ENCODE measurements at regions of chr2 and their contacts with region 1.

Region 1: GRCh38 chr2:233426619-233427342 is 72.5 kb downstream of the DGKD start:
- DNase-seq: no peak
- H3K4me3 ChIP-seq: no peak overlapping the region
- H3K27ac ChIP-seq: no peak overlapping the region
- H3K4me1 ChIP-seq: peaks cover 10% of the 10 kb centered on the region
- H3K27me3 ChIP-seq: no peaks in the 10 kb centered on the region
- CTCF ChIP-seq: no peak
- POLR2A ChIP-seq: no peak

Region 2: DNA sequence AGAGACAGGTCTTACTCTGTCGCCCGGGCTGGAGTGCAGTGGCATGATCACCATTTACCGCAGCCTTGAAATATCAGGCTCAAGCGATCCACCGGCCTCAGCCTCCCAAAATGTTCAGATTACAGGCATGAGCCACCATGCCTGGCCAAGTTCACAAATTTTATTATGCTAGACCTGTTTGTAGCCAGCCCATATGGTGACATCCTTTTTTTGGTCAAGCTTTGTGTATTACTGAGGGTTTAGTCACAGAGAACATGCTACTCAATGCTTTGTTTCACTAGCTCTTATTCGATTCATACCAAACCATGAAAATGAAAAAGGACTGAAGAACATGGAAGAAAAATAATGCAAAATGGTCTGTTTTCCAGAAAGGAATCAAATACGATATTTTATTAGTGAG is 31.1 kb before region 1 on chr2:
- CTCF ChIA-PET with region 1: no interaction called
- POLR2A ChIA-PET with region 1: no interaction called
- dilution Hi-C with region 1: no loop called
- intact Hi-C with region 1: no loop called
- DNase-seq: no peak
- H3K4me3 ChIP-seq: no peak overlapping the region
- H3K27ac ChIP-seq: no peak overlapping the region
- H3K4me1 ChIP-seq: no peaks in the 10 kb centered on the region
- H3K27me3 ChIP-seq: no peaks in the 10 kb centered on the region
- CTCF ChIP-seq: no peak
- POLR2A ChIP-seq: no peak

Region 3: DNA sequence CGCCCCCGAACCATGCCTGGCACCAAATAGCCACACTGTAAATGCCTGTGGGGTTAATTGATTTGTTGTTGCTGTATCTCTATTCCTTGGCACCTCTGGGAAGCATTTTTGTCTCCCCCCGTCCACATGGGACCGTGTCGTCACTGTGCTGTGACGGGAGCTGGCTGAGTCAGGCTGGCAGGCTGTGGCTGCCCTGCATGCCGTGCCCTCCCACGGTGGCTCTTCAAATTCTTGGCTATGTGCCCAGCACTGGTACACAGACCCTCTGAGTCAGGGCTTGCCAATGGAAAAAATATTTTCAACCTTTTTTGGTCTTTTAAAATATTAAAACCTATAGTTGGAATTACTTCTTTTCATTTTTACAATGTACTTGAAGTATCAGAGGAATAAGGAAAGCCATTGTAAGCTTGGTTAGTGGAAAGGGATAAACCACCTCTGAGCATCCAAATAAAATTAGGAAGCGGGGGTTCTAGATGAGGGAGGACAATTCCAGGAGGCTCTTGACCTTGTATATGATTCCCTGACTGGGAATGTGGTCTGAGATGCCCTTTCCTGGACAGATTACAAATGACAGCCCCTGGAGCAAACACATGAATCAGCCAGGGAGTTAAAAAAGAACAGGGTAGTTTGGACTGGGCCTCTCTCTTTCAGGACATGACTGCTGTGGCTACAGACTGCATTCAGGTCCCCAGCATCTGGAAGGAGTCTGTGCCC is 13.1 kb before region 1 on chr2:
- CTCF ChIA-PET with region 1: interaction called, 6 read pairs
- POLR2A ChIA-PET with region 1: no interaction called
- dilution Hi-C with region 1: no loop called
- intact Hi-C with region 1: loop called (anchors 1 kb)
- DNase-seq: peak; percentile 80
- H3K4me3 ChIP-seq: no peak overlapping the region
- H3K27ac ChIP-seq: peak overlapping the region; percentile 71
- H3K4me1 ChIP-seq: peaks cover 32% of the 10 kb centered on the region
- H3K27me3 ChIP-seq: no peaks in the 10 kb centered on the region
- CTCF ChIP-seq: no peak
- POLR2A ChIP-seq: no peak